Tibial artery (tissue), 4 donors: ENCODE measurements at regions of chr17 and their contacts with region 1.

Region 1: DNA sequence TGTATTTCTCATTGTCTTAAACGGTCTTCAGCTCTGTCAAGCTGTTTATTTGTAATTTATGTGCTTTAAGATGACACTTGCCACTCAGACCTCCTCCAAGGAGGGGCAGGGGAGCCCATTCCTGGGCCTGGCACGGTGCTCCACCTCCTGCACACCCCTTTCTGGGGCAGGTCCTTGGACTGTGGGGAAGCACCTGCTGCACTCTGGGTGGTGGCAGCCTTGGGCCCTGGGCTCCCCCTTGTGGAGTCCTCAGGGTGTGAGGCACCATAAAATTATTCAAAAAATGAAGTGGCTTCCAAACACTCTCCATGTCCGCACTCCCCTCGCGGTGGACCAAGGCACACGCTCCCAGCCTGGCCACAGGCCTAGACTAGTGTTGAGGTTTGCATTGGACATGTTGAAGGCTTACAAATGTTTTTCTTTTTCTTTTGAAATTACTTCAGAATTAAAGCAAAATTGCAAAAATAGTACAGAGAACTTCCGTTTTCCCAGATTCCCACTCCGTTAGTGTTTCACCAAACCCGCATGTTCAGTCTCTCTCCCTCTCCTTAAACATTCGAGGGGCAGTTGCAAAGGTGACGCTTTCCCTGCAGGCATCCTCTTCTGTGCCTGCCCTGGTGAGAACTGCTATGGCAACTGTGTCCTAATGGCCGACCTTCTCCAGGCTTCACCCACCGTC is 32.4 kb downstream of the FOXK2 start:
- DNase-seq: peak; percentile 78 to 92
- H3K4me3 ChIP-seq: no peak overlapping the region
- H3K27ac ChIP-seq: peak overlapping the region; percentile 69 to 72
- H3K4me1 ChIP-seq: peaks cover 0 to 63% (median 51%) of the 10 kb centered on the region in 4 donors
- H3K27me3 ChIP-seq: no peaks in the 10 kb centered on the region
- CTCF ChIP-seq: peak; percentile 81 to 85

Region 2: DNA sequence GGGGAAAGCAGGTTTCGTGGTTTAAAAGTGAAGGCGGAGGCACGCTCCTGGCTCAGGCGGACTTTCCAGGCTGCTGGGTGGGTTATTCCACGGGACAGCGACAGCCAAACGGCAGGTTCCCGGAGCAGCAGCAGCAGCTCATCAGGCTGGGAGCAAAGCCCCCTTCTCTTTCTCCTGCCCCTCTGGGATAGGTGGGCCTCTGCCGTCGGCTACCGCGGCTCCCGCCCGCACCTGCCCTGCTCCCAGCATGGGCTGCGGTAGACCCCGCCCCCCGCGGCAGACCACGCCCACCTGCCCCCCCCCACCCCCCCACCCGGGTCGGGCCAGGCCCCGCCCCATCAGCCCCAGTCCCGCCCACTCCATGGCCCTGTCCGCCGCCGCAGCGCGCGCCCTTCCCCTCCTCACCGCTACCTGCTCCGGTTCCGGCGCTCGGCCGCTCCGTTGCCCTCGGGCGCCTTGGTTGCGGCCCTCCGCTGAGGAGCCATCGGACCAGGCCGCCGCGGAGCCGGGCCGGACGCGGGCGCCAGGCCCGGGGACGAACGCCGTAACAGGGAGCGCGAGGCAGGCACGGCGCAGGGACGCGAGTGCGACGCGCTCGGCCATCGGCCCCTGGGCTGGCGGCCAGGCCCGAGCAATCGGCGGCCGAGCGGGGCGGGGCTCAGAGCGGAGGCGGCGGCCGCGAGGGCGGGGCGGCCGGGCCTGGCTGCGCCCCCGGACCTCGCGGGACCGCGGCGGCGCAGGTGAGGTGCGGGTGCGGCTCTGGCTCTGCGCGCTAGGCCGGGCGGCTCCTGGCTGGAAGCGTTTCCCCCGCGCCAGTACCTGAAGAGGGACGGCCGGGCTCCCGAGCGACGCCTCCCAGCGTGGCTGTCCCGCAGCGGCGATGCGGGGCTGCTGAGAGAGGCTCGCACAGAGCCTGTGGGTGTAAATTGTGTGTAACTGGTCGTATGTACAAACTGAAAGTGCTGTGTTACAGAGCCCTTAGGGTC is 133.6 kb before region 1 on chr17 and contains the starts of genes HEXD and OGFOD3:
- intact Hi-C with region 1: loop called (anchors 5 kb)
- DNase-seq: peak; percentile 69 to 90
- H3K4me3 ChIP-seq: peak within 1 kb of the TSS; percentile 58 to 77
- H3K27ac ChIP-seq: peak within 1 kb of the TSS; percentile 84 to 85
- H3K4me1 ChIP-seq: peaks cover 0 to 24% (median 16%) of the 10 kb centered on the region in 4 donors
- H3K27me3 ChIP-seq: no peaks in the 10 kb centered on the region
- CTCF ChIP-seq: peak in 1 of 2 experiments; percentile 22

Region 3: DNA sequence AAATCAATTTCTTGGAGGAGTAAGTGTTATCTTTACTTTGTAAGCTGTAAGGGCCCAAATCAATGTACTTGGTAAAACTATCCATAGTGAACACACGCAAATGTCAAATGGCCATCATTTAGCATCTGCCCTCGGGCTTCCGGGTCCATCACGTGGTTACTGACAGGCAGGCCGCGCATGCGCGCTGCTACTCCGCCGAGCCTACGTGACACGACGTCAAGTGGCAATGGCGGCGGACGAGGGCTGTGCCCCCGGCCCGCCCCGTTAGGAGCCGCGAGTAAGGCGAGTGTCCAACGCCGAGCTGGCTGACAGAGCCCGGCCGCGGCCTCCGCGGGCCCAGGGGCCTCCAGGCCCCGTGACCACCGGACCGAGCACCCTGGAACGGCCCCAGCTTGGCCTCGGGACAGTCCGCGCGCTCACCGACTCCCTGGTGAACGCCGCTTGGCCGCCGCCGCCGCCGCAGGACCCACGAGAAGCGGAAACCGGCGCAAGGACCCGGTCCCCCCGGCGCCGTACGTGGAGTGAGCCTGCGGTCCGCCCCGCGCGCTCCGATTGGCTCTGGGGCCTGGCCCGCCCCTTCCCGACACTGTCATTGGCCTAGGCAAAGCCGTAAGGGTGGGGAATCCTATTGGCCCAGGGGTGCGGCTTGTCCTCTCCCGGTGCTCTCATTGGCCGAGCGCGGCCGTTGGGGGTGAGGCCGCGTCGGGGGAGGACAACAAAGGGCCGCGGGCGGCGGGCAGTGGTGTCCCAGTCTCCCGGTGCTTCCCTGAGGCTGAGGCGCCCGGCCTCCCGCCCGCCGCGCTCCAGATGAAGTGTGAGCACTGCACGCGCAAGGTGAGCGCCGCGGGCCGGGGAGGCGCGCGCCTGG is 93.7 kb before region 1 on chr17 and contains the start of gene NARF:
- intact Hi-C with region 1: loop called (anchors 10 kb)
- DNase-seq: peak; percentile 97 to 99
- H3K4me3 ChIP-seq: peak within 1 kb of the TSS; percentile 83 to 88
- H3K27ac ChIP-seq: peak within 1 kb of the TSS; percentile 100
- H3K4me1 ChIP-seq: peaks cover 0 to 23% (median 15%) of the 10 kb centered on the region in 4 donors
- H3K27me3 ChIP-seq: no peaks in the 10 kb centered on the region
- CTCF ChIP-seq: no peak

Region 4: GRCh38 chr17:82592767-82593589 is 41.1 kb after region 1 on chr17:
- intact Hi-C with region 1: no loop called
- DNase-seq: peak; percentile 71 to 91
- H3K4me3 ChIP-seq: peak overlapping the region; percentile 59 to 80
- H3K27ac ChIP-seq: peak overlapping the region; percentile 88 to 90
- H3K4me1 ChIP-seq: peaks cover 0 to 44% (median 35%) of the 10 kb centered on the region in 4 donors
- H3K27me3 ChIP-seq: no peaks in the 10 kb centered on the region
- CTCF ChIP-seq: no peak